PC-3 (cell line): ENCODE measurements at regions of chr7 and their contacts with region 1.

Region 1: DNA sequence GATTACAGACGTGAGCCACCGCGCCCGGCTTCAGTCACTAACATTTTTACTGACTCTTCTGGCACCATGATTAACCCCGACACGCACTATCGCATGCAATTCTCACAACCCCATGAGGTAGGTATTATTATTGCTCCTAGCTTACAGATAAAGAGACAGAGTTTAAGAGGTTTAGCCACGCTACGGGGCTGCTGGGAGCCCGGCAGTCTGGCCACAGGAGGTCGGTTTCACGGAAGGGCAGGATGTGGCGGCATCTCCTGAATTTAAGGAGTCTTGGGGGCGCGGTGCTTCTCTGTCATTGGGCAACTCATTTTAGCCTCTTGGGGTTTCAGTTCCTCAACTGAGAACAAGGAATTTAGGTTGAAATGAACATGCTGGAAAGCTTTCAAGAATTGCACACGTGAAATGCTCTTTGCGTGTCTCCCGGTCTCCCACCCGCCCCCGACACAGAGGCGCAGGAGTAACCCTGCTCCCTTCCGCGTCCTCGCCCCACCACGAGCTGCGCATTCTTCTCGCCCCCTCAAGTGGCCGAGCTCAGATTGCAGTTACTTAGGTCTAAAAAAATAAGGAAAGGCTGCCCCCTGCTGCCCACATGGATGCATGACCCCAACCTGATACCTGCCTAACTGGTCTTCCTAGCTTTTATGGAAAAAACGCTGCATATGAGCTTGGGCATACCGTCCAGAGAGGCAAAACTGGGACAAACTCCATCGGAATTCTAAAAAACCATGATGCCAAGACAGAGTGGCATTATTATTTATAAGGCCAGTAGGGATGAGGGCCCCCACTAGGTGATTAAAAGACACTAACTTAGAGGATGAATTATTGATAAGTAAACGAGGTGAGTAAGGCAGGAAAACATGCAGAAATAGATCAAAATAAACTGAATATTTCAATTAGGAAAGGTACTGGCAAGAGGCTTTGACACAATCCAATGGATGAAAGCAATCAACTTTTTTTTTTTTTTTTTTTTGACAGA is 12.4 kb downstream of the PRSS2 start:
- DNase-seq: peak; percentile 94
- ATAC-seq: peak; percentile 85
- H3K4me3 ChIP-seq: peak overlapping the region; percentile 65
- H3K27ac ChIP-seq: peak overlapping the region; percentile 17; the same call in 1 of the 2 replicates
- H3K4me1 ChIP-seq: 0 out of 2 replicates have a peak, but pooled peaks cover 4% of the 10 kb centered on the region
- H3K27me3 ChIP-seq: no peaks in the 10 kb centered on the region
- CTCF ChIP-seq: peak; percentile 97

Region 2: GRCh38 chr7:142168745-142169144 is 614.5 kb before region 1 on chr7:
- CTCF ChIA-PET with region 1: no interaction called
- POLR2A ChIA-PET with region 1: no interaction called
- intact Hi-C with region 1: no loop called
- DNase-seq: peak; percentile 27
- ATAC-seq: no peak
- H3K4me3 ChIP-seq: no peak overlapping the region
- H3K27ac ChIP-seq: no peak overlapping the region
- H3K4me1 ChIP-seq: no peaks in the 10 kb centered on the region
- H3K27me3 ChIP-seq: peaks cover 20% of the 10 kb centered on the region
- CTCF ChIP-seq: no peak

Region 3: GRCh38 chr7:142535123-142535779 is 248.0 kb before region 1 on chr7:
- CTCF ChIA-PET with region 1: interaction called, 84 read pairs
- POLR2A ChIA-PET with region 1: no interaction called
- intact Hi-C with region 1: loop called (anchors 1 kb)
- DNase-seq: peak; percentile 94
- ATAC-seq: peak; percentile 92
- H3K4me3 ChIP-seq: no peak overlapping the region
- H3K27ac ChIP-seq: no peak overlapping the region
- H3K4me1 ChIP-seq: peaks cover 24% of the 10 kb centered on the region
- H3K27me3 ChIP-seq: no peaks in the 10 kb centered on the region
- CTCF ChIP-seq: peak; percentile 94

Region 4: GRCh38 chr7:142632291-142633134 is 150.7 kb before region 1 on chr7:
- CTCF ChIA-PET with region 1: interaction called, 40 read pairs
- POLR2A ChIA-PET with region 1: no interaction called
- intact Hi-C with region 1: loop called (anchors 2 kb)
- DNase-seq: peak; percentile 87
- ATAC-seq: peak; percentile 96
- H3K4me3 ChIP-seq: no peak overlapping the region
- H3K27ac ChIP-seq: no peak overlapping the region
- H3K4me1 ChIP-seq: no peaks in the 10 kb centered on the region; the same call in 1 of the 2 replicates
- H3K27me3 ChIP-seq: peaks cover 7% of the 10 kb centered on the region; the same call in 1 of the 2 replicates
- CTCF ChIP-seq: peak; percentile 83

Region 5: GRCh38 chr7:142669074-142669654 is 114.0 kb before region 1 on chr7:
- CTCF ChIA-PET with region 1: interaction called, 4 read pairs
- POLR2A ChIA-PET with region 1: no interaction called
- intact Hi-C with region 1: loop called (anchors 1 kb)
- DNase-seq: peak; percentile 68
- ATAC-seq: peak; percentile 61
- H3K4me3 ChIP-seq: no peak overlapping the region
- H3K27ac ChIP-seq: no peak overlapping the region
- H3K4me1 ChIP-seq: no peaks in the 10 kb centered on the region
- H3K27me3 ChIP-seq: no peaks in the 10 kb centered on the region; the same call in 1 of the 2 replicates
- CTCF ChIP-seq: peak; percentile 62

Region 6: GRCh38 chr7:142711746-142712619 is 71.2 kb before region 1 on chr7:
- CTCF ChIA-PET with region 1: interaction called, 36 read pairs
- POLR2A ChIA-PET with region 1: no interaction called
- intact Hi-C with region 1: loop called (anchors 1 kb)
- DNase-seq: peak; percentile 66
- ATAC-seq: peak; percentile 75; the same call in 1 of the 2 replicates
- H3K4me3 ChIP-seq: no peak overlapping the region
- H3K27ac ChIP-seq: no peak overlapping the region
- H3K4me1 ChIP-seq: no peaks in the 10 kb centered on the region
- H3K27me3 ChIP-seq: peaks cover 3% of the 10 kb centered on the region; the same call in 1 of the 2 replicates
- CTCF ChIP-seq: peak; percentile 85

Region 7: DNA sequence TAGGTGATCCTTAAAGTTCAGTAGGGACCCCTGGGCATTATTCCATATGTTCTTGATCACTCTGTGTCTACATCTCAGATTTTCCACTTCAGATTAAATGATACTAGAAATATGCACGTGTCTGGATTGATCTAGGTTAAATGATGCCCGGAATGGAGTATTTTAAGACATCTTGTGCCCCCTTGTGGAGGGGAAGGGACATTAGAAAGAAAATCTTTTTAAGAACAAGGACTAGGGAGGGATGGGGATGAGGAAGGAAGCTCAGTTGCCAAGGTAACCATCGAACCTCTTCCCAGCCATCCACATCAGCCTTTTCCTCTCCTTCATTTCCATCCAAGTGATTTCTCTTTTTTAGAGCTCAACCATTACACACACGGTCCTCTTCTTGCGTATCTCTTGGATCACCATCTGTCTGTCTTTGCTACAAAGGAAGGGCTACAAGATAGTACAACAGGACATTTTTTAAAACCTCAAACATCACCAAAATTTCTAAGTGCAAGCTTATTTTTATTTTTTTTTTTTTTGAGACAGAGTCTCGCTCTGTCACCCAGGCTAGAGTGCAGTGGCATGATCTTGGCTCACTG is 28.0 kb after region 1 on chr7:
- CTCF ChIA-PET with region 1: interaction called, 90 read pairs
- POLR2A ChIA-PET with region 1: interaction called, 12 read pairs
- intact Hi-C with region 1: loop called (anchors 1 kb)
- DNase-seq: peak; percentile 74
- ATAC-seq: no peak
- H3K4me3 ChIP-seq: no peak overlapping the region
- H3K27ac ChIP-seq: peak overlapping the region; percentile 98
- H3K4me1 ChIP-seq: peaks cover 79% of the 10 kb centered on the region
- H3K27me3 ChIP-seq: no peaks in the 10 kb centered on the region
- CTCF ChIP-seq: peak; percentile 84

Region 8: DNA sequence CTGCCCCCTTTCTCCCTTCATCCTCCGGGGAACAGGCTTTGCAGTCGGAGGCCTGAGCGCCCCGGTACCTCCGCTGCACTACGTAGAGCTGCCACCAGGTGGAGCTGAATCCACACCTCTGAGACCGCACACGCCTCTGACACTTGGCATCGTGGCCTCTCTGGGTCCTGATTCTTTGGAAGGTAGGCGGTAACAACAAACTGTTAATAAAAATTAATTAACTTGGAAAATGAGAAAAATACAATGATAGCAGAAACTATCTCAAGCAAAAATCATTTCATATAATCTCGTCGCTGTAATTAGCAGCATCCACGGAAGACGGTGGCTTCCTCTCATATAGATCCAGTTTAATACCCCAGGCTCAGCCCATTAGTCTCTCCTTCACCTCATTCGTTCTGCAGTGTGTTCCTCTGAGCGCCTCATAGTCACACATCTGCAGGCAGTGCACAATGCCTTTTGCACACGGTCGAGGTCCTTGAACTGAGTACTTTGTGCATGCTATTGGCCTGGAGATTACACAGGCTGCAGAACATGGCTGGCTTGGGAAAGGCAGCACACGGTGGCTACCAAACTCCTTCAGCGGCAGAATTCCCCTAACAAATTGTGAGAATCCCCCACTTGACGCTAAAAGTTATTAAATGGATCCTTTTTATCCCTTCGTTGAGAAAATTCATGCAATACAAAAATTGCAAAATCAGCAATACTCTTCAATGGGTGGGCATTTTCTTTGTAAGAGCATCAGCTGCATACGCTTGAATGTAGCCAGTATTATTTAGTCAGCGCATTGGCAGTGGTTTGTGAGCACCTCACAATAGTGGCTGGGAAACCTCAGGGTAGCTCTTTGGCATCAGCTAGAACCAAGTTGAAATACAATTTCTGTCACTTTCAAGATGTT is 225.0 kb after region 1 on chr7:
- CTCF ChIA-PET with region 1: interaction called, 7 read pairs
- POLR2A ChIA-PET with region 1: no interaction called
- intact Hi-C with region 1: loop called (anchors 2 kb)
- DNase-seq: peak; percentile 81
- ATAC-seq: peak; percentile 84
- H3K4me3 ChIP-seq: no peak overlapping the region
- H3K27ac ChIP-seq: no peak overlapping the region
- H3K4me1 ChIP-seq: peaks cover under 1% of the 10 kb centered on the region
- H3K27me3 ChIP-seq: peaks cover 31% of the 10 kb centered on the region
- CTCF ChIP-seq: peak; percentile 87